IMR-90 (cell line): ENCODE measurements at regions of chr7 and their contacts with region 1.

Region 1: GRCh38 chr7:27210441-27211083 is 10.7 kb upstream of the HOXA13 start:
- DNase-seq: peak; percentile 32
- ATAC-seq: peak; percentile 91
- H3K4me3 ChIP-seq: 0 out of 2 replicates have a peak overlapping the region, but pooled peaks have one; percentile 5
- H3K27ac ChIP-seq: no peak overlapping the region
- H3K4me1 ChIP-seq: no peaks in the 10 kb centered on the region
- H3K27me3 ChIP-seq: peaks cover 95% of the 10 kb centered on the region
- CTCF ChIP-seq: peak; percentile 65
- POLR2A ChIP-seq: no peak
- RAD21 ChIP-seq: peak; percentile 57

Region 2: DNA sequence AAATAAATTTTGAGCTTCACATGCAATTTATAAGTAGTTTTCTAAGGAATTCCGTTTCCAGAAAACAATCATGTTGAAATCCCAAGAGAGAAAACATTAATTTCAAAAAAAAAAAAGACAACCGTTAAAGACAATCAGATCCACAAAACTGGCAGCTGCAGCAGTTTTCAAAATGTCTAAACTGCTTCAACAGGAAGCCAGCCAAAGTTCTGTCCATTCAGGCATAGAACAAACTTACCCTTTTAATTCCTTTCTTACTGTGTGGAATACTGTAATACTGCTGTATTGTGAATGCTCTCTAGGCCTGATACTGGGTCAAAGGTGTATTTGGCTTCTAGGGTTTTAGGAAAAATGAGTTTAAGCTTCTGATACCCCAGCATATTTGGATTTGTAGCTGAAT is 146.4 kb before region 1 on chr7:
- CTCF ChIA-PET with region 1: no interaction called
- POLR2A ChIA-PET with region 1: no interaction called
- dilution Hi-C with region 1: no loop called
- in situ Hi-C with region 1: no loop called
- intact Hi-C with region 1: no loop called
- DNase-seq: no peak
- ATAC-seq: peak; percentile 37; the same call in 1 of the 2 replicates
- H3K4me3 ChIP-seq: no peak overlapping the region
- H3K27ac ChIP-seq: no peak overlapping the region
- H3K4me1 ChIP-seq: 0 out of 2 replicates have a peak, but pooled peaks cover 1% of the 10 kb centered on the region
- H3K27me3 ChIP-seq: peaks cover 1% of the 10 kb centered on the region; the same call in 1 of the 2 replicates
- CTCF ChIP-seq: no peak
- POLR2A ChIP-seq: no peak
- RAD21 ChIP-seq: no peak

Region 3: DNA sequence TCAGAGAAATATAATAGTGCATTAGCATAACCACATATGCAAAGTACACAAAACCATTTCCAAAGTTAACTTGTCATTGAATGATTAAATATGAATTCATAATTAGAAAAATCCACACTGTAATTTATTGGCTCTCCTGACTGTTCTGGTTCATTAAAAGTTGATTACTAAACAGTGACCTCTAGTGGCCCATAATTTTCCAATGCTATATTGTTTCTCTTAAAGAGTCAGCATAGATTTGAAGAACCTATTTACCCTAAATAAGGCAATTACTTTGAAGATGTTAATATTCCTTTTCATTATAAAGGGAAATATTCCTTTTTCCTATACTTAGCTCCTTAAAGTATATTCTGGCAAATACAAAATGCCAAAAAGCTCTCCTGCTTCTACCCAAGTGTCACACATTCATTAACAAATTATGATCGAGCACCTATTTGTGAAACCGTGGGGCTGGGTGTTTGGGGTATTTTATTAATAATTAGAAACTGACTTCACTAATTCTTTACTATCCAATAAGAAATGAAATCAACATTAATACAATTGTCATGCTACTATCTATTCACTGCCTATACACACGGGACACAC is 365.9 kb after region 1 on chr7:
- CTCF ChIA-PET with region 1: interaction called, 3 read pairs
- POLR2A ChIA-PET with region 1: no interaction called
- dilution Hi-C with region 1: no loop called
- in situ Hi-C with region 1: no loop called
- intact Hi-C with region 1: loop called (anchors 1 kb)
- DNase-seq: peak; percentile 46
- ATAC-seq: peak; percentile 75
- H3K4me3 ChIP-seq: no peak overlapping the region
- H3K27ac ChIP-seq: no peak overlapping the region
- H3K4me1 ChIP-seq: peaks cover 2% of the 10 kb centered on the region; the same call in 1 of the 2 replicates
- H3K27me3 ChIP-seq: no peaks in the 10 kb centered on the region
- CTCF ChIP-seq: peak; percentile 66
- POLR2A ChIP-seq: no peak
- RAD21 ChIP-seq: peak; percentile 60

Region 4: GRCh38 chr7:27590416-27590815 is 379.9 kb after region 1 on chr7:
- CTCF ChIA-PET with region 1: no interaction called
- POLR2A ChIA-PET with region 1: no interaction called
- dilution Hi-C with region 1: no loop called
- in situ Hi-C with region 1: no loop called
- intact Hi-C with region 1: no loop called
- DNase-seq: peak; percentile 14
- ATAC-seq: no peak
- H3K4me3 ChIP-seq: no peak overlapping the region
- H3K27ac ChIP-seq: no peak overlapping the region
- H3K4me1 ChIP-seq: no peaks in the 10 kb centered on the region
- H3K27me3 ChIP-seq: no peaks in the 10 kb centered on the region
- CTCF ChIP-seq: no peak
- POLR2A ChIP-seq: no peak
- RAD21 ChIP-seq: no peak

Region 5: GRCh38 chr7:27662490-27663205 is 452.1 kb after region 1 on chr7 and contains the start of gene HIBADH:
- CTCF ChIA-PET with region 1: no interaction called
- POLR2A ChIA-PET with region 1: no interaction called
- dilution Hi-C with region 1: no loop called
- in situ Hi-C with region 1: no loop called
- intact Hi-C with region 1: loop called (anchors 5 kb)
- DNase-seq: peak; percentile 99
- ATAC-seq: peak; percentile 98
- H3K4me3 ChIP-seq: peak within 1 kb of the TSS; percentile 71
- H3K27ac ChIP-seq: peak within 1 kb of the TSS; percentile 78
- H3K4me1 ChIP-seq: no peaks in the 10 kb centered on the region
- H3K27me3 ChIP-seq: no peaks in the 10 kb centered on the region
- CTCF ChIP-seq: 0 out of 2 replicates have a peak, but pooled peaks have one; percentile 11
- POLR2A ChIP-seq: peak; percentile 62
- RAD21 ChIP-seq: peak; percentile 21; the same call in 1 of the 2 replicates
- total RNA-seq, gene HIBADH: 36.6 and 45.5 TPM in 2 replicates

Region 6: DNA sequence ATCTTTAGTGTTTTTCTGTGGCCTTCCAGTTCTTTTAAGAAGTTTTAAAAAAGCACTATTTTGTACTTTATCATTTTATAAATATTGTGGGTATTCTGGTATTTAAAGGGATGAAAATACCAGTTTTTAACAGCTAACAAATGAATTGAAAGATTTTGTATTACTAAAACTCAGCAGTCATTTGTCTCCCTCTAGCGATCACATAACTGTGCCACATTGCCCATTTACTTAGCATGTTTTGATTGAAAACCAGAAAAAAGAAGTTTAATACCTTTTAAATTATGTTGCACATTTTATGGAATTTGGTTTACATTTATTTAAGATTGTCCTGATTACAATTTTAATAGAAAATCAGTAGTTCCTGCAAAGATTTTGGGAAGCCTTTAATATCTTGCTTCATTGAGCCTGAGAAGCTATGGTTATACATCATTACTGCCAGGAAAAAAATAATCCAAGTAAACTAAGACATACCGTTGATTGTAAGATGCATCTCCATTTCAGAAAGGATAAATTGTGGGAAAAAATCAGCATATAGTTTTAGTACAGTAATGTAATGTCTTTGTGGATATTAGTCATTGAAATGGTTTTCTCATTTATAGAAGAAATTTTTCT is 564.3 kb after region 1 on chr7:
- CTCF ChIA-PET with region 1: interaction called, 3 read pairs
- POLR2A ChIA-PET with region 1: no interaction called
- dilution Hi-C with region 1: no loop called
- in situ Hi-C with region 1: loop called (anchors 10 kb)
- intact Hi-C with region 1: loop called (anchors 5 kb)
- DNase-seq: peak; percentile 58
- ATAC-seq: peak; percentile 53; the same call in 1 of the 2 replicates
- H3K4me3 ChIP-seq: no peak overlapping the region
- H3K27ac ChIP-seq: no peak overlapping the region
- H3K4me1 ChIP-seq: no peaks in the 10 kb centered on the region
- H3K27me3 ChIP-seq: no peaks in the 10 kb centered on the region
- CTCF ChIP-seq: peak; percentile 69
- POLR2A ChIP-seq: no peak
- RAD21 ChIP-seq: peak; percentile 74

Region 7: GRCh38 chr7:28020302-28020940 is 809.9 kb after region 1 on chr7:
- CTCF ChIA-PET with region 1: no interaction called
- POLR2A ChIA-PET with region 1: no interaction called
- dilution Hi-C with region 1: no loop called
- in situ Hi-C with region 1: no loop called
- intact Hi-C with region 1: loop called (anchors 5 kb)
- DNase-seq: peak; percentile 77
- ATAC-seq: peak; percentile 93
- H3K4me3 ChIP-seq: no peak overlapping the region
- H3K27ac ChIP-seq: no peak overlapping the region
- H3K4me1 ChIP-seq: peaks cover 12% of the 10 kb centered on the region
- H3K27me3 ChIP-seq: no peaks in the 10 kb centered on the region
- CTCF ChIP-seq: peak; percentile 87
- POLR2A ChIP-seq: no peak
- RAD21 ChIP-seq: peak; percentile 96